Activated naive CD4-positive, alpha-beta T cell treated with anti-CD3 and anti-CD28 coated beads, Interleukin-2, amount 10 ng/mL, durations not matched to agents 7 days and 5 days (primary cell): ENCODE measurements at regions of chr5 and their contacts with region 1.

Region 1: GRCh38 chr5:111246459-111246858 is 22.3 kb downstream of the CAMK4 start:
- DNase-seq: no peak
- H3K4me3 Mint-ChIP-seq: no peak overlapping the region
- H3K27ac Mint-ChIP-seq: peak overlapping the region; percentile 84
- H3K4me1 Mint-ChIP-seq: peaks cover 79% of the 10 kb centered on the region
- H3K27me3 Mint-ChIP-seq: no peaks in the 10 kb centered on the region

Region 2: DNA sequence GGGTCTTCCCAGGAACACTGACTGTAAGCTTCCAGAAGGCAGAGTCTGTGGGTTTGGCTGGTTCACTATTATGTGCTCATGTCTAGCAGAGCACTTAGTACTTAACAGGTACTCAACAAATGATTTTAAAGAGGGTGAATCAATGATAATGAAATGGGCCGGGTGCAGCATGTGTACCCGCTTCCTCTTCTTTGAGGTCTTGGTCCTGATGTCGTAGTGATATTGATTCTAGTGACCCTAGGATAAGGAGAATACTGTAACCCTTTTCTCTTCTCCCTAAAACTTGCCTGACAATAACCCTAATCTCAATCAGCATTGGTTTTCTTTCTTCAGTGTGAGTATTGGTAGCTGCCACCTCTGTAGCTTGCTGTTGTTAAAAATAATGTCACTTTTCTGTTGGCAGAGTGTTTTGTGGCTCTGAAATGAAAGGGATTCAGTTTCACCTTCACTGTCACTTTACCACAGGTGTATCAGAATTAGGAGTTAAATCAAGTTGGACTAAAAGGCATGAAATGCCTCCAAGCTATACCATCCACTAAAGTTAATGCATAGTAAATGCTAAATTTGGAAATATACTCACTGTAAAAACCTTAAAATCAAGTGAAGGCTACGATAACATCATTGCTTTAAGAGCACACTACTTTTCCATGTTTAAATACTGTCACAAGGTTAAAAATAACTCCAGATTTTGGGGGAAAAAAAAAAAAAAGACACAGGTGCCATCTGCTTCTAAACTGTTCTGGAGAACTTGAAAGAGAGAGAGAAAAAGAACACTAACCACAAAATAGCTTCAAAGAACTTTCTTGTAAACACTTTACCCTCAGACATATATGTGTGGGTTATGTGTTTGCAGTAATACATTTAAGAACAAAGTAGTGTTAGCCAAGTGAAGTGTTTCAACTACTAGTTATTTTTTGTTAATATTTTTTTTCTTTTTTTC is 16.3 kb before region 1 on chr5:
- CTCF ChIA-PET with region 1: interaction called, 12 read pairs
- DNase-seq: no peak
- H3K4me3 Mint-ChIP-seq: peak overlapping the region; percentile 81
- H3K27ac Mint-ChIP-seq: peak overlapping the region; percentile 100
- H3K4me1 Mint-ChIP-seq: peaks cover 75% of the 10 kb centered on the region
- H3K27me3 Mint-ChIP-seq: no peaks in the 10 kb centered on the region

Region 3: GRCh38 chr5:111364992-111365391 is 118.5 kb after region 1 on chr5:
- CTCF ChIA-PET with region 1: no interaction called
- DNase-seq: no peak
- H3K4me3 Mint-ChIP-seq: no peak overlapping the region
- H3K27ac Mint-ChIP-seq: no peak overlapping the region
- H3K4me1 Mint-ChIP-seq: peaks cover 9% of the 10 kb centered on the region
- H3K27me3 Mint-ChIP-seq: no peaks in the 10 kb centered on the region

Region 4: GRCh38 chr5:111645303-111645838 is 398.9 kb after region 1 on chr5:
- CTCF ChIA-PET with region 1: no interaction called
- DNase-seq: no peak
- H3K4me3 Mint-ChIP-seq: no peak overlapping the region
- H3K27ac Mint-ChIP-seq: no peak overlapping the region
- H3K4me1 Mint-ChIP-seq: no peaks in the 10 kb centered on the region
- H3K27me3 Mint-ChIP-seq: peaks cover 7% of the 10 kb centered on the region